ENCODE measurements at regions of chr6 and their contacts with region 1.

Region 1: DNA sequence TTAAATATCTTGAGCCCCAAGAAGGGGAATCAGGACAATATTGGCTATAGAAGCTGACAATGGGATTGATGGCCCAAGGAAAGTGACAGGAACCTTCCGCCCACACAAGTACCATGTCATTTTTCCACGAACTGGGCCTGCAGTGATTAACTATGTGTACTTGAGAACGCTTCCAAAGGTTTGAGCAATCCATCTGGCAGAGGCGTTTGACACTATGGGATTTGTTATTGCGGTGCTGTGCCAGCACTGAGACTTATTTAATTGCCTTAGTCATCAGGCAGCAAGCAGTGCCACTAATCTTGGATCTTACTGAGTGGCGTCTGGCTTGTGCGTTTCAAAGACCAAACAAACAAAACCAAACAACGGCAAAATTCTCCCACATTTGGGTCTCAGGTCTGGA is 135.6 kb upstream of the UST start:
- DNase-seq: peak; percentile 88 to 90
- ATAC-seq: peak; percentile 99 to 100
- H3K4me3 ChIP-seq: peak overlapping the region in 2 of 4 donors; percentile 15
- H3K27ac ChIP-seq: peak overlapping the region; percentile 80 to 91 (median 84)
- H3K4me1 ChIP-seq: peaks cover 29 to 41% of the 10 kb centered on the region in 2 donors
- H3K27me3 ChIP-seq: no peaks in the 10 kb centered on the region
- CTCF ChIP-seq: no peak
- POLR2A ChIP-seq: no peak

Region 2: DNA sequence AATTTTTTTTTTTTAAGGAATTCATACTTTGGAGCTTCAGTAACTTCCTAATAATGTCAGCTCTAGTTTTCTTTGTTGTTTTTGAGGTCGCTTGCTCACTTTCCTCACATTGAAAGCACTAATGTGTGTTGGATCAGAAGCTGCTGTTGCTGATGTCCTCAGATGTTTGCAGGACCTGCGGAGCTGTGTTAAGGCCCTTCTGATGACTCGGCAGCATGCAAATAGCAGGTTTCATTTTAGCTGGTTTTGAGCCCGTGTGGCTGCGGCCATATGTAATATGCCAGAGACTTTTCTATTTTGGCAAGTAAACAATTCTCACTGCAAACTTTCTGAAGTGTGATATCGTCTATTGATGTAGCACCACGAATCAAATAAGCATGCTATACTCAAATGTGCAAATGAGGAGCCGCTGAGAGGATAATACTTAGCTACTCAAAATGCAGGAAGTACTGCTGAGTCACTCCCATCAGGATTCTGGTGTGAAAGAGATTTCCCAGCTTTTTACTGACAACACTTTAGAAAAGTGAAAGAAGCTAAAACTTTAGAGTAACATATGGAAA is 80.8 kb before region 1 on chr6:
- in situ Hi-C with region 1: no loop called
- intact Hi-C with region 1: no loop called
- DNase-seq: no peak
- ATAC-seq: peak in 1 of 2 donors; percentile 49
- H3K4me3 ChIP-seq: peak overlapping the region in 3 of 4 donors; percentile 6 to 23 (median 15)
- H3K27ac ChIP-seq: peak overlapping the region; percentile 9 to 31 (median 26)
- H3K4me1 ChIP-seq: peaks cover 7 to 13% of the 10 kb centered on the region in 2 donors
- H3K27me3 ChIP-seq: no peaks in the 10 kb centered on the region
- CTCF ChIP-seq: no peak
- POLR2A ChIP-seq: no peak

Region 3: DNA sequence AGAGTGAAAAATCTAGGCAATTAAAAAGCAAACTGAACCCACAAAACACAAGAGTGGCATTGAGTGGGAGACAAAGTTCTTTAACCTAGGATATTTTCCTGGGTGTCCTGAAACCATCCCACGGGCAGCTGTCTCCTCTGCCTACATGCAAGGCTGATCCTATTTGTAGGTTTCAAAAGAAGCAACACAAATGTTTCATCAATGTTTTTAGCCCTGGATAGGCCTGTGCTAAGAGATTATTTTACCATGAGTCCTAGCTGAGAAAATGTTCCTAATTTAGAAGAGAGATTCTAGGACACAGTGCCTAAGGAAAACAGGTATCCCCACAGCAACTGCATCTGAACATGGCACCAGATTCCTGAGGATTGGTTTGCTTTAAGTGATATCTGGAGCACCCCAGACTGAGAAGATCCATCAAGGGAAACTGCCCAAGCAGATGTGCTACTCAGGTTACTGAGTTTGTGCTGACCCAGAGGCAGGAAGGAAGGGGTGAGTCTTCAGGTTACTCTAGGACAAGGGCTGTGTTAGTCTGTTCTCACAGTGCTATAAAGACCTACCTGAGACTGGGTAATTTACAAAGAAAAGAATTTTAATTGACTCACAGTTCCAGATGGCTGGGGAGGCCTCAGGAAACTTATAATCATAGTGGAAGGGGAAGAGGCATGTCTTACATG is 24.0 kb after region 1 on chr6:
- in situ Hi-C with region 1: no loop called
- intact Hi-C with region 1: loop called (anchors 1 kb)
- DNase-seq: peak; percentile 16 to 31
- ATAC-seq: peak; percentile 98
- H3K4me3 ChIP-seq: no peak overlapping the region
- H3K27ac ChIP-seq: peak overlapping the region; percentile 55 to 82 (median 60)
- H3K4me1 ChIP-seq: peaks cover 14 to 20% of the 10 kb centered on the region in 2 donors
- H3K27me3 ChIP-seq: no peaks in the 10 kb centered on the region
- CTCF ChIP-seq: no peak
- POLR2A ChIP-seq: no peak

Region 4: GRCh38 chr6:148746363-148747144 is 135.3 kb after region 1 on chr6 and contains the start of gene UST:
- in situ Hi-C with region 1: no loop called
- intact Hi-C with region 1: loop called (anchors 5 kb)
- DNase-seq: peak; percentile 77 to 78
- ATAC-seq: peak; percentile 75 to 84
- H3K4me3 ChIP-seq: peak within 1 kb of the TSS; percentile 68 to 80 (median 71)
- H3K27ac ChIP-seq: peak within 1 kb of the TSS; percentile 68 to 79 (median 72)
- H3K4me1 ChIP-seq: peaks cover 0 to 16% of the 10 kb centered on the region in 2 donors
- H3K27me3 ChIP-seq: peaks cover 4 to 6% (median 5%) of the 10 kb centered on the region in 3 donors
- CTCF ChIP-seq: no peak
- POLR2A ChIP-seq: peak; percentile 20 to 70
- total RNA-seq, gene UST: 2.3 to 8.4 (median 2.8) TPM